CD4-positive, alpha-beta T cell (primary cell): ENCODE measurements at regions of chr10 and their contacts with region 1.

Region 1: GRCh38 chr10:84264611-84265141 is 19.8 kb downstream of the RGR start:
- DNase-seq: peak; percentile 51 to 83 (median 66)
- ATAC-seq: peak; percentile 94
- H3K4me3 ChIP-seq: no peak overlapping the region
- H3K4me3 Mint-ChIP-seq: no peak overlapping the region
- H3K27ac ChIP-seq: no peak overlapping the region
- H3K27ac Mint-ChIP-seq: no peak overlapping the region
- H3K4me1 ChIP-seq: peaks cover 10% of the 10 kb centered on the region
- H3K4me1 Mint-ChIP-seq: peaks cover 9% of the 10 kb centered on the region
- H3K27me3 ChIP-seq: peaks cover 3 to 8% of the 10 kb centered on the region in 2 experiments
- H3K27me3 Mint-ChIP-seq: peaks cover 41% of the 10 kb centered on the region
- CTCF ChIP-seq: peak; percentile 97

Region 2: GRCh38 chr10:84059523-84059922 is 205.2 kb before region 1 on chr10:
- CTCF ChIA-PET with region 1: no interaction called
- POLR2A ChIA-PET with region 1: no interaction called
- intact Hi-C with region 1: no loop called
- DNase-seq: no peak
- ATAC-seq: no peak
- H3K4me3 ChIP-seq: no peak overlapping the region
- H3K4me3 Mint-ChIP-seq: no peak overlapping the region
- H3K27ac ChIP-seq: no peak overlapping the region
- H3K27ac Mint-ChIP-seq: no peak overlapping the region
- H3K4me1 ChIP-seq: no peaks in the 10 kb centered on the region
- H3K4me1 Mint-ChIP-seq: no peaks in the 10 kb centered on the region
- H3K27me3 ChIP-seq: no peaks in the 10 kb centered on the region
- H3K27me3 Mint-ChIP-seq: peaks cover 21% of the 10 kb centered on the region
- CTCF ChIP-seq: no peak

Region 3: DNA sequence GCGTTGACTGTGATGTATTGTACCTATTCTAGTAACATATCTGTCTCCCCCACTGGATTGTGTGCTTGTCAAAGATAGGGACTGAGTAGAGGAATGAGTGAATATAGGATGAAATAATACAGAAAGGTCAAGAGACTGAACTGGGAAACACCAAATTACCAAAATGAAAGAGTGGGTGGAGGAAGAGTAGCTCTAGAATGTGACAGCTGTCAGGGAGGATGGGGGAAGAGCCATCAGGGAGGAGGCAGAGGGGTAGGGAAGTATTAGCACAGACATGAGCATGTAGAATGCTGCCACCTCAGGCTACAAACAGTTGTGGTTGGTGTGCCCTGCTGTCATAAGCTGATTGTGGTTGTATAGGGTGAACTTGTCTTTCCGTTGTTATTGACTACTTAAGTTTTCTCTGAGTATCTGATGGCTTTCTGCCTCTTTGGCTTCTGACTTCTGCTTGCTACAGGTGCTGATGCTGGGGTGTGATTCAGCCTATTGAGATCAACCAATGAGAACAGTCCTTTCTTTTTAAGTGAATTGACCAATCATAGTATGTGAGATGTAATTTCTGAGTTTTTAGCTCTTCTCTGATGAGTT is 69.3 kb after region 1 on chr10:
- CTCF ChIA-PET with region 1: interaction called, 14 read pairs
- POLR2A ChIA-PET with region 1: interaction called, 5 read pairs
- intact Hi-C with region 1: loop called in 1 of 2 experiments (anchors 2 kb)
- DNase-seq: peak; percentile 38 to 95 (median 62)
- ATAC-seq: peak; percentile 78
- H3K4me3 ChIP-seq: no peak overlapping the region
- H3K4me3 Mint-ChIP-seq: peak overlapping the region; percentile 42
- H3K27ac ChIP-seq: peak overlapping the region; percentile 64 to 72
- H3K27ac Mint-ChIP-seq: peak overlapping the region; percentile 82
- H3K4me1 ChIP-seq: peaks cover 44% of the 10 kb centered on the region
- H3K4me1 Mint-ChIP-seq: peaks cover 54% of the 10 kb centered on the region
- H3K27me3 ChIP-seq: no peaks in the 10 kb centered on the region
- H3K27me3 Mint-ChIP-seq: no peaks in the 10 kb centered on the region
- CTCF ChIP-seq: no peak

Region 4: DNA sequence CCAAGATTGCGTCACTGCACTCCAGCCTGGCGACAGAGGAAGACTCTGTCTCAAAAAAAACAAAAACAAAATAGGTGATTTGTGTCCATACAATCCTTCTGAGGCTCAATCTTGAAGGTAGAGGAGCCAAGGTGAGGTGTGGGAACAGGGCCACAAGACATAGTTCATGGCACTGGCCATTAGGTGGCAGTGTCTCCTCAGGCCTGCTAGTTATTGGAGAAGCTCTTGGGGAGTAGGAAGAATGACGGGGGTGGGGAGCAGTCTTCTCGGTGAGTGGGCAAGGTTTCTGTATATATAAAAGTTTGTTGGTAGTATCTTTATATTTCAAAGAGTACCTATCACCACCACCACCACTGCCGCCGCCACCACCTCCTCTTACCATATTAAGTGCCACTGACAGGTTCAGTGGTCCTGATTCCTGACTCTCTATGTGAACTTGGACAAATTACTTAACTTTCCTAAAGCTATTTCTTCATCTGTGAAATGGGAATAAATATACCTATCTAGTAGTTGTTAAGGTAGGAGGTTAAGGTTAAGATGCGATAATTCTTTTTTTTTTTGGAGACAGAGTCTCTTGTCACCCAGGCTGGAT is 87.7 kb after region 1 on chr10:
- CTCF ChIA-PET with region 1: interaction called, 10 read pairs
- POLR2A ChIA-PET with region 1: no interaction called
- intact Hi-C with region 1: loop called in 1 of 2 experiments (anchors 5 kb)
- DNase-seq: peak; percentile 45 to 84 (median 62)
- ATAC-seq: peak; percentile 90
- H3K4me3 ChIP-seq: no peak overlapping the region
- H3K4me3 Mint-ChIP-seq: no peak overlapping the region
- H3K27ac ChIP-seq: no peak overlapping the region
- H3K27ac Mint-ChIP-seq: peak overlapping the region; percentile 30
- H3K4me1 ChIP-seq: peaks cover 30% of the 10 kb centered on the region
- H3K4me1 Mint-ChIP-seq: peaks cover 81% of the 10 kb centered on the region
- H3K27me3 ChIP-seq: no peaks in the 10 kb centered on the region
- H3K27me3 Mint-ChIP-seq: no peaks in the 10 kb centered on the region
- CTCF ChIP-seq: peak; percentile 70

Region 5: GRCh38 chr10:84375011-84375410 is 110.3 kb after region 1 on chr10:
- CTCF ChIA-PET with region 1: interaction called, 6 read pairs
- POLR2A ChIA-PET with region 1: no interaction called
- intact Hi-C with region 1: loop called (anchors 1 to 2 kb)
- DNase-seq: peak in 9 of 14 experiments; percentile 7 to 79 (median 31)
- ATAC-seq: peak; percentile 76
- H3K4me3 ChIP-seq: no peak overlapping the region
- H3K4me3 Mint-ChIP-seq: no peak overlapping the region
- H3K27ac ChIP-seq: no peak overlapping the region
- H3K27ac Mint-ChIP-seq: no peak overlapping the region
- H3K4me1 ChIP-seq: no peaks in the 10 kb centered on the region
- H3K4me1 Mint-ChIP-seq: peaks cover 63% of the 10 kb centered on the region
- H3K27me3 ChIP-seq: no peaks in the 10 kb centered on the region
- H3K27me3 Mint-ChIP-seq: no peaks in the 10 kb centered on the region
- CTCF ChIP-seq: peak; percentile 89

Region 6: GRCh38 chr10:84429926-84430520 is 165.3 kb after region 1 on chr10:
- CTCF ChIA-PET with region 1: interaction called, 4 read pairs
- POLR2A ChIA-PET with region 1: no interaction called
- intact Hi-C with region 1: loop called in 1 of 2 experiments (anchors 10 kb)
- DNase-seq: peak; percentile 43 to 81 (median 56)
- ATAC-seq: peak; percentile 94
- H3K4me3 ChIP-seq: no peak overlapping the region
- H3K4me3 Mint-ChIP-seq: no peak overlapping the region
- H3K27ac ChIP-seq: no peak overlapping the region
- H3K27ac Mint-ChIP-seq: no peak overlapping the region
- H3K4me1 ChIP-seq: peaks cover 7% of the 10 kb centered on the region
- H3K4me1 Mint-ChIP-seq: peaks cover 63% of the 10 kb centered on the region
- H3K27me3 ChIP-seq: no peaks in the 10 kb centered on the region
- H3K27me3 Mint-ChIP-seq: no peaks in the 10 kb centered on the region
- CTCF ChIP-seq: peak; percentile 74

Region 7: DNA sequence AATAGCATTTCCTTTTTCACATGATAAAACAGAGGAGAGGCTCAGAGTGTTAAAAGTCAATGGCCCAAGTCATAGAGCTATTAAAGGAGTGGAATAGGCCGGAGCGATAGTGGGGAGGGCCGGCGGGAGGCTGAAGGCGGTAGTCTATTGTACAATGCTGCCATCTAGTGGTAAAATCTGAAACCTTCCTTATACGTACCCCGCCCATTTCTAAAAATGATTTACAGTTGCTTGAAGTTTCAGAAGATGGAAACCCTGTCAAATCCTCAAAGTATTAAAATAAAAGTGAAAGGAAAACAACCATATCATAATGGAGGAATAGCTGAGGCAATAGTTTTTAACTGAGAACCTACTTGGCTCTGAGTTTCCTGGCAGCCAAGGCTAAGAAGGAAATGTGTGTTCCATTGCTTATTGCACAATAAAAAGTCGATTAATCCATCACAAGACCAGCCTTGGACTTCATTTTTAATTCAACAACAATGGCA is 272.8 kb after region 1 on chr10:
- CTCF ChIA-PET with region 1: interaction called, 46 read pairs
- POLR2A ChIA-PET with region 1: interaction called, 4 read pairs
- intact Hi-C with region 1: loop called (anchors 1 kb)
- DNase-seq: peak in 6 of 14 experiments; percentile 11 to 80 (median 52)
- ATAC-seq: peak; percentile 67
- H3K4me3 ChIP-seq: no peak overlapping the region
- H3K4me3 Mint-ChIP-seq: no peak overlapping the region
- H3K27ac ChIP-seq: no peak overlapping the region
- H3K27ac Mint-ChIP-seq: no peak overlapping the region
- H3K4me1 ChIP-seq: peaks cover 14% of the 10 kb centered on the region
- H3K4me1 Mint-ChIP-seq: peaks cover 11% of the 10 kb centered on the region
- H3K27me3 ChIP-seq: peaks cover 11 to 18% of the 10 kb centered on the region in 2 experiments
- H3K27me3 Mint-ChIP-seq: peaks cover 39% of the 10 kb centered on the region
- CTCF ChIP-seq: peak; percentile 96